Motor neuron (in vitro differentiated cells): ENCODE measurements at regions of chr5 and their contacts with region 1.

Region 1: DNA sequence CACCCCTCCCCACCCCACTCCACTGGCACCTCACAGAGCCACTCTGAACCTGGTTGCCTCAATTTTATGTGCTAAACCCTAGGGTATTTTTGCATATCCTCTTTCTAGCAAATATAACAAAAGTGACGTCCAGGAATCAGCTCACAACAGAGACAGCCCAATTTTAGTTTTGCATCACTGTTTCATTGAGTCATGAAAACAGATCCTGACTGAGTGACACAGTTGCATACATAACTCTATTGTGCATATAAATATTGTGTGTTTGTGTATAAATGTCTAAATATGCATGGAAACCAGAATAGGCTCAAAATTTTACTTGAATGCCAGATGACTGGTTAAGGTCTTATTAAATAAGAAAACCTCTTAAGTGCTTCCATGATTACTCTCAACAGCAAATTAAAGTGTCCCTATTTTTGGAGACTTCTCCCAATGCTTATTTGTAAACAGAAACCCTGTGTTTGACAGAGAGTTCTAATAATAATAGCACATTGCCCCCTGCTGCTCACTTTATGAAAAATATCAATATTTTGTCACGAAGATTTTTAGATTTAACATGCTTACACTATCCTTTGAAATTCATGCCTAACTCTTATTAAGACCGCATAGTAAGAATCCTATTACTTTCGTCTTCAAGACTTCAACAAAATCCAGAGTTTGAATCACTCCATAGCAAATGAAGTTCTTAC is 75.5 kb upstream of the PRRC1 start:
- ATAC-seq: peak in 3 of 8 experiments; percentile 68 to 87 (median 70)
- H3K4me3 ChIP-seq: no peak overlapping the region
- H3K27ac ChIP-seq: no peak overlapping the region
- H3K4me1 ChIP-seq: no peaks in the 10 kb centered on the region

Region 2: DNA sequence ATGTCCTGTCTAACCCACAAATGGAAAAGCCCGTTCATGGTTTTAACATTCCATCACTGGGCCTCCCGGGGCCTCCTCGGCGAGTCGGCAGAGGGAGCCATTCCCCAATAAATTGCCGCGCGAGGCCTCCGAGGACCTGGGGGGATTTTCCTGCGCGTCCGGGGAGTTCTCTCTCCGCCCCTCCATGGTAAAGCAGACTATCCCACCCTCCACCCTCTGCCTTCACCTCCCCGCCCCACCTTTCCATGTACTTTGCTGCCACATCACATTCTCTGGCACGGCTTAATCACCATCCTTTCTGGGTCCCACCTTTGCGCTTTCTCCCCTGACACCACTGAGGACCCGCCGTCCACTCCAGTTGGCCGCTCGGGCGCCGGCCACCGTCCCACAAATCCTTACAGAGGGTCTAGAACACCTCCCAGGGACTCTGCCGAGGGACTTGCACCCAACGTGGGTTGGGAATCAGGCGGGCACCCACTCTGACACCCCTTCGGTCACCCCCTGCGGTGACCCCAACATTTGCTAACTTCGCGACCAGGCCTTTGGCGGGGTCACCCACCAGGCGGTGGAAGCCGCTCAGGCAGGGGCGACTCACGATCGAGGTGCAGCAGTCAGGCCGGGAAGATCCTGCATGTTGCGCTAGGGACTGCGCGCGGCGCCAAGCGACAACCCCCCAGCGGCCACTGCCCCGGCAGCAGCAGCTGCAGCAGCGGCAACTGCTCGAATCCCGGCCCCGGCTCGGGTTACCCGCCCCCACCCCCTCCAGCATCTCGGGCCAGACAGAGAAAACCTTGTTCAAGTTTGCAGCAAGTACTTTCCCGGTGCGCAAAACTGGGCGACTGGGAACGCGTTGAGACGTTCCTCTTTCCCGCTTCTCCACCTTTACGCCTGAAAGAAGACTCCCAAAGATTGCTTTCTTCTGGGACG is 151.7 kb before region 1 on chr5 and contains the start of gene MEGF10:
- in situ Hi-C with region 1: loop called in 6 of 9 experiments (anchors 10 to 25 kb)
- ATAC-seq: peak; percentile 86 to 95 (median 92)
- H3K4me3 ChIP-seq: peak within 1 kb of the TSS; percentile 33 to 63 (median 40)
- H3K27ac ChIP-seq: no peak within 1 kb of the TSS
- H3K4me1 ChIP-seq: peaks cover 0 to 6% of the 10 kb centered on the region in 2 donors
- total RNA-seq, gene MEGF10: 1.9 to 317 (median 6.3) TPM

Region 3: DNA sequence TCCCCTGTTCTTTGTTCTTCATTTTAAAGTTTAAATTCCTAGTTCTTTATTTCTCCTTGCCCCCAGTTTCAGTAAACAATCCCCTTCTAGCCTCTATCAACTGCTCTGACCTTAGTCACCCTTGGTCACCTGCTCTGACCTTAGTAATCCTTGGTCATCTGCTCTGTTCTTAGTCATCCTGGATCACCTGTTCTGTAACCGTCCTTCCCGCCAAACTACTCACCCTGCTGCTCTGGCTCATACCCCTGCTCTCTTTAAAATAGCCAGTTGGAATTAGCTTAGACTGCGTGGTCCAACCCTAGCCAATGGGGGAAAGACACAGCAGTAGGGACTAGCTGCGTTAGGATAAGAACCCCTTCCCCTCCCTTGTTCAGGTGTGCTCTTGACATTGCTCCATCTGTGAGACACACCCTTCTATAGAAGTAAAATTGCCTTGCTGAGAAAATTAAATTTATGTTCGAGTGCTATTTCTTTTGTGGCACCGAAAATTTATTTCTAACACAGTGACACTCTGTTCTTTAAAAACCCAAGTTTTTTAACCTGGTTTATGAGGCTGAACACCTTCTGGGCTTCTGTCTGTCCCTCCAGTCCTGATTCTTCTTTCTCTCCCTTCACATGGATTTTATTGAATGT is 79.3 kb after region 1 on chr5:
- in situ Hi-C with region 1: no loop called
- ATAC-seq: no peak
- H3K4me3 ChIP-seq: no peak overlapping the region
- H3K27ac ChIP-seq: no peak overlapping the region
- H3K4me1 ChIP-seq: peaks cover 3 to 13% of the 10 kb centered on the region in 2 donors

Region 4: DNA sequence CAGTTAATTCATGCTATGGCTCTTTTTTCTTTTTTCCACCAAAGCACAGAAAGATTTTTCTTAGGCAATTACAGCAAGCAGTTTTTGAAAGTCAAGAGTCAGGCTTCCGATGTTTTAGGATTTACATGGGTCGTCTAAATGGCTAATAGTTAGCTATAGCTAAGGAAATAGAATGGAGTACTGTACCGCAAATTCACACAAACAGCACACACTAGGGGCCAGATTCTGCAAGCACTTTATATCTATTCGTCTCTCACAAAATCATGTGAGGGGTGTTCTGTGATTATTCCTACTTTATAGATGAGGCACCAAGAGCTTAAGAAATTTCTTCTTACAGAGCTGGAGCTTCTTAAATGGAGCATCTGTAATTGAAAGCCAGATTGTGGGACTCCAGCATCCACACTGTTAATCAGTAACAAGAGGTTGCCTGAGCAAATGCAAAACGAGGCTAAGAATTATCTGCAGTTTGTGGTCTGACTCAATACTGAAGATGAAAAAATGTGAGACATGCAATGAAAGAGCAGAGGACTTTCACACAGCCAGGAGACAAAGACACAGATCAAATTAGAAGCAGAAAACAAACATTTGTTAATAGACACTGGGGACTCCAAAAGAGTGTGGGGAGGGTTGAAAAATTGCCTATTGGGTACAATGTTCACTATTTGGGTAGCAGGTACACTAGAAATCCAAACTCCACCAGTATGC is 144.3 kb after region 1 on chr5:
- in situ Hi-C with region 1: no loop called
- ATAC-seq: peak in 6 of 8 experiments; percentile 21 to 91 (median 68)
- H3K4me3 ChIP-seq: no peak overlapping the region
- H3K27ac ChIP-seq: peak overlapping the region in 1 of 2 donors; percentile 57
- H3K4me1 ChIP-seq: peaks cover 11 to 32% of the 10 kb centered on the region in 2 donors

Region 5: DNA sequence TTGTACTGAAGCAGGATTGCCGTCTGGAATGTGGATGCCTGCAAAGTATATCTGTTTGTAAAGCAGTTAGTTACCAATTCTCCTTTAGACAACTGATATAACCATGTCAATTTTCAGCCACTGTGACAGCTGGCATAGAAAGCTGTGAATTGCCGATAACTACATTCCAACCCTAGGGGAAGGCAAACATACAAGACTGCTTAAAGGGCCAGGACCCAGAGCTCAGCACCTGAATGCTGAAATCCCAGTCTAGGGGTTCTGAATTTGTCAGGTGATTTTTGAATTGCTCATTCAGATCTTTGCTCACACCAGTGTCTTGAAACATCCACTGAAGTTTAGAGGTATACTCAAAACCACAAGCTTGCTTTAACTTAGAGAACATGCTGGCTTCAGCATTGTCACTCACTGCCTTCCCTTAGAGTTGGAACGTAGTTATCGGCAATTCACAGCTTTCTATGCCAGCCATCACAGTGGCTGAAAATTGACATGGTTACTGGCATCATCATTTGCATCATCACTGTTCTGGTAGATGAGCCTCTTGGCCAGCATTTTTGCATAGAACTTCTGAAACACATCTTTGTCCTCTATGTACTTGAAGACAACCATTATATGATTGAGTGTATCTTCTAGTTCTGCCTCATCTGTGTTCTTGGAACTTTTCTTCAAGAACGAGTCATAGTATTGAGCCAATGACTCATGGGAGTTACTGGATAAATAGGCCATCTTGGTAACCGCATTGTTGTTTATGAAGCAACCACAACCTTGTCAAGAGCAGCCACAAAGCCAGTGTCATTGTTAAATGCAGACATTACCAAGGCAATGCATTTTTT is 343.4 kb after region 1 on chr5:
- in situ Hi-C with region 1: no loop called
- ATAC-seq: peak in 2 of 8 experiments; percentile 61 to 68
- H3K4me3 ChIP-seq: no peak overlapping the region
- H3K27ac ChIP-seq: no peak overlapping the region
- H3K4me1 ChIP-seq: no peaks in the 10 kb centered on the region